AG04450 (cell line): ENCODE measurements at regions of chr6 and their contacts with region 1.

Region 1: DNA sequence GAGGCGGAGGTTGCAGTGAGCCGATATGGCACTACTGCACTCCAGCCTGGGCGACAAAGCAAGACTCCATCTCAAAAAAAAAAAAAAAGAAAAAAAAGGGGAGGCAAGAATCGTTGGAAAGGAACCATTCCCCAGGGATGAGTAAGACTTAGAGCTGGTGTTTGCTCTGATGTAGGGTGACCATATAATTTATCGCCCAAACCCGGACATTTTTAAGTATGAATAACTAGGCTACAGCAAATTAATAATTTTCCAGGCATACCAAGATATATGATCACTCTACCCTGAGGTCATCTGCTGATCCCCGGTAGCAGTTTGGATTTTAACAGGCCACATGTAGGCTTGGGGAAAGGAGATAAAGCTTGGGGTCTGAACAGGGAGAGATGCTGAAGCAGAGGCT is 260.9 kb downstream of the BTBD9 start:
- DNase-seq: no peak
- H3K4me3 ChIP-seq: no peak overlapping the region
- H3K27ac ChIP-seq: no peak overlapping the region
- H3K27me3 ChIP-seq: no peaks in the 10 kb centered on the region
- CTCF ChIP-seq: no peak

Region 2: DNA sequence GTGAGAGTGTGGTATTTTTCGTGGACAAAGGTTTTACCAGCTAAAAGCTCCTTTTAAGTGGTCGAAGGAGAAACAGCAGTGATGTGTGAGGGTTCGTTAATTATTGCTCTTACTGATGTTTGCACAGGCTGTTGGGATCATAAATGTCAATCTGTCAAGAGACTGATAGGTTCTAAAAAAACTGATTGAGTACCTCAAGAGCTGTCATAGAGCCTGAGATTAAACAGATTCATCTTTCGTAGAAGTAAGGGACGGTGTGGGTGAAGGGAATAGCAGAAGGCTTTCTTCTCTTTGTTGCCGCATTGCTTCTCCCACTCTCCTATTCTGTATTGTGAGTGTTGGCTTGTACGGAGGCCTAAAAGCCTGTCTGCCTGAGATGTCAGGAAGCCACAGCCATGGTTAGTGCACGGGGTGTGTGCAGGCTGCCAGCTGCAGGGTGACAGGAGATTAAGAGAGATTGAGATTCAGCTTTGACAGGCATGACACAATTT is 268.3 kb before region 1 on chr6:
- CTCF ChIA-PET with region 1: interaction called, 17 read pairs
- POLR2A ChIA-PET with region 1: no interaction called
- DNase-seq: no peak
- H3K4me3 ChIP-seq: no peak overlapping the region
- H3K27ac ChIP-seq: no peak overlapping the region
- H3K27me3 ChIP-seq: no peaks in the 10 kb centered on the region
- CTCF ChIP-seq: no peak

Region 3: DNA sequence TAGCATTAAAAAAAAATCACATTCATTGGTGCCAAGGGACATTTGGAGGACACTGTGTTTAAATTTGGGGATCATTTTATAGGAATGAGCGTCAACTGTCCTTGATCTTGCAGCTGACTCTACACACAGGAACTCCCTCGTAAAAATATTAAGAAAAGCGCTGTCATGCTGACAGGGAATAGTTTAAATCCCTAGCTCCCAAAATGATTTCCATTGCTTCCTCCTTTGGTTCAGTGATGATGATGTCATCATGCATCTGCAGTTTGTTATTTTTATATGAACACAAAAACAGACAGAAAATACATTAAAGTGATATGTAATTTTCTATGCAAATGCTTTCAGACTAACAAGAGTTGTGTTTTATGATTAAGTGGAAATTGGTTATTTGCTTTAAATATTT is 14.7 kb before region 1 on chr6:
- CTCF ChIA-PET with region 1: no interaction called
- POLR2A ChIA-PET with region 1: no interaction called
- DNase-seq: no peak
- H3K4me3 ChIP-seq: no peak overlapping the region
- H3K27ac ChIP-seq: no peak overlapping the region
- H3K27me3 ChIP-seq: no peaks in the 10 kb centered on the region
- CTCF ChIP-seq: no peak